Activated naive CD4-positive, alpha-beta T cell treated with anti-CD3 and anti-CD28 coated beads for 36 hours (primary cell): ENCODE measurements at regions of chr3 and their contacts with region 1.

Region 1: DNA sequence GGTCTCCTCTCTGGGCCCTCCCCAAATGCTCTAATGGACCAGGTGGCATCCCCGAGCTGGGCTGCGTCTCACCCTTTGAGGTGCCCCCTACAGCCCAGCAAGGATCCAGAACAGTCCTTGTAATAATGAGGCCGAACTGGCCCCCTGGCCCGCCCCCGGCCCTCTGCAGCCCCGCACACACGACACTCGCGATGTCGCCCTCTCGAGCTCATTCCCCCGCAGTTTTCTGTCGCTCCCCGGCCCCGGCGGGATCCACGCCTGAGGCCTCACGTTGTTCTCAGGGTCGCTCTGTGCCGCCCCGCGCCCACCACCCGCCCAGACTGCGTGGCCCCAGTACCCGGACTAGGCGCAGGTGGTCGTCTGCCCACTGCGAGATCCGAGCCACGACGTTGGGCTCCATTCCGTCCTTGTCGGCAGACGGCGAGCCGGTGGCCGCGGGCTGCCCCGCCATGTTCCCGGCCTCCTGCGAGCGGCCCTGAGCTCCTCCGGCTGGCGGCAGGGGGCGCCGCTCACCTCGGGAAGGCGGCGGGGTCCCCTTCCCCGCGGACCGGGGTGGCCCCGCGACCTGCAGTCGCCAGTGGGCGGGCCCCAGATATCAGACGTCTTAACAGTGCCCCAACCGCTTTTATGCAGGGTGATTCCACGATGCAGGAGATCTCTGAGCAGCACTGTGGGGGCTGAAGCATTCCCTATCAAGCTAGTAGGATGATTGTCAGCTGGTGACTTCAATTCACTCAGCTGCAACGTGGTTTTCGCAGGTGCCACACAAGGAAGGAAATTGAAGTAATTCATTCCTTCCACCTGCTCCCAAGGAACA is at the start of gene C3orf33:
- DNase-seq: peak; percentile 78
- H3K4me3 Mint-ChIP-seq: peak within 1 kb of the TSS; percentile 85
- H3K27ac Mint-ChIP-seq: peak within 1 kb of the TSS; percentile 58
- H3K4me1 Mint-ChIP-seq: peaks cover 15% of the 10 kb centered on the region
- H3K27me3 Mint-ChIP-seq: no peaks in the 10 kb centered on the region
- total RNA-seq, gene C3orf33: 2.7 to 3.2 TPM

Region 2: DNA sequence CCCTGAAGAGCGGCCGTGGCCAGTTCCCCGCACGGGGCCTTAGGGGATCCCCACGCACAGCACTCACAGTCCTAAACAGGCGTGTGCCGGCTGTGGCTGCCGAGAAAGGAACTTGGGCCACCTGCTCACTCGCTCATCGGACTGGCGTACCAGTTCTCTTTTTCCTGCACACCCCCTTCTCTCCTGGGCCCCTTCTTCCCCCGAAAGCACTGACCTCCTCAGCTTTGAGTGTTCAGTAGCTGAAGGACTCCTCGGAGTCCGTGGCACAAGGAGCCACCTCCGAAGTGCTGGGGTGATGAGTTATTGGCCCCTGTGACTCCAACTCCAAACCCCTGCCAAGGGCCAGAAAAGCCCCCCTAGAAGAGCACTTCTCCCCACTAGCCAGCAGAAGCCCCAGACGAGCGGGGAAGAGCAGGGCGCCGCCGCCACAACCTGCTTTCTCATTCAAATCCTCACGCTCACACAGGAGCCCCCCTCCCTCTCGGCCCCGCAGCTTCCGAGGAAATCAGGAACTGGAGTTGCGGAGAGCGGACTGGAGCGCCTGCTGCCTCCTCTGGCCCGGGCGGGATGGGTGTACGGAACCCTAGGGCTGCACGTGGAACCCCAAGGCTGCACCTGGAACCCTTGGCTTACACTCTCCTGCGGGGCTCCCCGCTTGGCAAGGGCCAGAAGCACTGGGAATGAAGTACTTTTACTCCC is 61.2 kb before region 1 on chr3 and contains the start of gene PLCH1:
- CTCF ChIA-PET with region 1: interaction called, 7 read pairs
- intact Hi-C with region 1: loop called (anchors 2 kb)
- DNase-seq: peak; percentile 74
- H3K4me3 Mint-ChIP-seq: peak within 1 kb of the TSS; percentile 83
- H3K27ac Mint-ChIP-seq: no peak within 1 kb of the TSS
- H3K4me1 Mint-ChIP-seq: peaks cover 9% of the 10 kb centered on the region
- H3K27me3 Mint-ChIP-seq: peaks cover 30% of the 10 kb centered on the region
- total RNA-seq, gene PLCH1: 0.21 to 0.27 TPM

Region 3: GRCh38 chr3:155753036-155753639 is 52.9 kb before region 1 on chr3:
- CTCF ChIA-PET with region 1: interaction called, 8 read pairs
- intact Hi-C with region 1: loop called (anchors 1 kb)
- DNase-seq: peak; percentile 22
- H3K4me3 Mint-ChIP-seq: no peak overlapping the region
- H3K27ac Mint-ChIP-seq: no peak overlapping the region
- H3K4me1 Mint-ChIP-seq: no peaks in the 10 kb centered on the region
- H3K27me3 Mint-ChIP-seq: no peaks in the 10 kb centered on the region

Region 4: DNA sequence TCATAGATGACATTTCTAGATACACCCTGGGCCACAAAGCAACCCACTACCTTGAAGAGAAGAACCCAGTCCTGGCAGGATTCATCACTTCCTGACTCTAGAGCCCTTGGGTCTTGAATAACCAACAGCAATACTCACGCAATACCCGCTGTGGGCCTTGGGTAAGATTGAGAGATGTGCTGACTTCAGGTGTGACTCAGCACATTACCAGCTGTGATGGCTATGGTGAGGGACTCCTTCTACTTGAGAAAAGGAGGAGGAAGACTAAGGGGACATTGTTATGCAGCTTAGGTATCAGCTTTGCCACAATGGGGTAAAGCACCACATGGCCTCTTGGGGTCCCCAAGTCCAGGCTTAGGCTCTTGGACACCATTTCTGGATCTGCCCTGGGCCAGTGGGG is 14.8 kb before region 1 on chr3:
- CTCF ChIA-PET with region 1: interaction called, 15 read pairs
- intact Hi-C with region 1: no loop called
- DNase-seq: peak; percentile 15
- H3K4me3 Mint-ChIP-seq: no peak overlapping the region
- H3K27ac Mint-ChIP-seq: no peak overlapping the region
- H3K4me1 Mint-ChIP-seq: peaks cover 11% of the 10 kb centered on the region
- H3K27me3 Mint-ChIP-seq: no peaks in the 10 kb centered on the region

Region 5: GRCh38 chr3:155859859-155860258 is 53.8 kb after region 1 on chr3:
- CTCF ChIA-PET with region 1: interaction called, 13 read pairs
- intact Hi-C with region 1: no loop called
- DNase-seq: no peak
- H3K4me3 Mint-ChIP-seq: no peak overlapping the region
- H3K27ac Mint-ChIP-seq: no peak overlapping the region
- H3K4me1 Mint-ChIP-seq: peaks cover 17% of the 10 kb centered on the region
- H3K27me3 Mint-ChIP-seq: no peaks in the 10 kb centered on the region

Region 6: GRCh38 chr3:155884291-155884690 is 78.3 kb after region 1 on chr3:
- CTCF ChIA-PET with region 1: interaction called, 10 read pairs
- intact Hi-C with region 1: no loop called
- DNase-seq: no peak
- H3K4me3 Mint-ChIP-seq: no peak overlapping the region
- H3K27ac Mint-ChIP-seq: no peak overlapping the region
- H3K4me1 Mint-ChIP-seq: peaks cover 51% of the 10 kb centered on the region
- H3K27me3 Mint-ChIP-seq: no peaks in the 10 kb centered on the region

Region 7: GRCh38 chr3:155995525-155996351 is 189.7 kb after region 1 on chr3:
- CTCF ChIA-PET with region 1: interaction called, 4 read pairs
- intact Hi-C with region 1: loop called (anchors 2 kb)
- DNase-seq: no peak
- H3K4me3 Mint-ChIP-seq: no peak overlapping the region
- H3K27ac Mint-ChIP-seq: no peak overlapping the region
- H3K4me1 Mint-ChIP-seq: no peaks in the 10 kb centered on the region
- H3K27me3 Mint-ChIP-seq: no peaks in the 10 kb centered on the region